ENCODE measurements at regions of chr5 and their contacts with region 1.

Region 1: DNA sequence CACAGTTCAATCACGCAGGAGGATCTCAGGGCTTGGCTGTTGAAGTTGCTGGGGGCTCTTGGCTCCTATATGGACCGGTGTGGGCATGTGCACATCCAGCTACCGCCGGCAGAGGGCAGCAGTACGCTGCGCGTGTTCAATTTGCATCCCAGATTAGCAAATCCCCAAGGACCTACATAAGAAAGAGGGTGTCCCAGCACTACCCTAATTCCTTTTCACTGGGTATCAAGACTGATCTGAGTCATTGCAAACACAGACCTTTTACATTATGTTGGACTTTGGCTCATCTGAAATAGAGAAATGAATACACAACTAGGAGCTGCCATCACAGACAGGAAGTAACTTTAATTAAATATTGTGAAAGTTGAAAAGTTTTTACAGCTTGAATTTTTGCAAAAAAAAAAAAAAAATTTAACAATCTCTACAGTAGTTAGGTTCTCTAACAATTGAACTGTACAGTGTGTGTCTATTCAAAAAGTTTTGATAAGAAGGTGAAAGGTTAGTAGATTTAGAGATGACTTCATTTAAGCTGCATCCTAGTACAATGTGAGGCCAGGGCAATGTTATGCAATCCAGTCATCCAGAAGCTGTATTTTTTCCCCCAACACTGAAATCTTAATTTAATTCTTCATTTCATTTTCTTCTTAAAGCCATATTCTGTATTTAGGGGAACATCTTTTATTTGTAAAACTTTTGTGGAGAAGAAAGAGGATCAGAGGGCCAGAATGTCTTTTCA is 404.0 kb downstream of the EBF1 start:
- DNase-seq: peak; percentile 16
- H3K4me3 ChIP-seq: no peak overlapping the region
- H3K27ac ChIP-seq: no peak overlapping the region
- H3K27me3 ChIP-seq: no peaks in the 10 kb centered on the region
- CTCF ChIP-seq: peak; percentile 97

Region 2: GRCh38 chr5:158174918-158175851 is 520.6 kb before region 1 on chr5:
- CTCF ChIA-PET with region 1: interaction called, 55 read pairs
- POLR2A ChIA-PET with region 1: no interaction called
- DNase-seq: peak; percentile 11
- H3K4me3 ChIP-seq: no peak overlapping the region
- H3K27ac ChIP-seq: no peak overlapping the region
- H3K27me3 ChIP-seq: peaks cover 2% of the 10 kb centered on the region
- CTCF ChIP-seq: peak; percentile 90

Region 3: DNA sequence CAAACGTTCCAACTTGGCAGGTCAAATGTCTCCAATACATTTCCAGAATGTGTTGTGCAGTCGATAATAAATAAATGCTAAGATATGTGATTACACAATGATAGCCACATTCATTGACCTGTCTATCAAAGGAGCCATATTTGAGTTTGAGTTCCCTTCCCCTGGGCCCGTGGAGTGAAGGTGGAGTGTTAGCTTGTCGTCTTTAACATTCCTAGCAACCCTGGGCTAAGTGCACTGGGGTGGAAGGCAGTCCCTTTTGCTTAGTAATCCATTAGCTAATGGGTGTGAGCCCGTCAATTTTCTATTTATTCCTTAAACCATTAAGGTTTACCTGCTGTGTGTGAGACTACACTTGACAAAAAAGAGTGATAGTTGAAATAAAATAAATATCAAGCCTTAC is 11.3 kb before region 1 on chr5:
- CTCF ChIA-PET with region 1: interaction called, 10 read pairs
- POLR2A ChIA-PET with region 1: no interaction called
- DNase-seq: no peak
- H3K4me3 ChIP-seq: no peak overlapping the region
- H3K27ac ChIP-seq: no peak overlapping the region
- H3K27me3 ChIP-seq: no peaks in the 10 kb centered on the region
- CTCF ChIP-seq: no peak

Region 4: GRCh38 chr5:159048298-159048697 is 352.5 kb after region 1 on chr5:
- CTCF ChIA-PET with region 1: no interaction called
- POLR2A ChIA-PET with region 1: no interaction called
- DNase-seq: no peak
- H3K4me3 ChIP-seq: no peak overlapping the region
- H3K27ac ChIP-seq: no peak overlapping the region
- H3K27me3 ChIP-seq: peaks cover 3% of the 10 kb centered on the region
- CTCF ChIP-seq: no peak

Region 5: GRCh38 chr5:159094745-159095144 is 399.0 kb after region 1 on chr5:
- CTCF ChIA-PET with region 1: interaction called, 44 read pairs
- POLR2A ChIA-PET with region 1: no interaction called
- DNase-seq: no peak
- H3K4me3 ChIP-seq: no peak overlapping the region
- H3K27ac ChIP-seq: no peak overlapping the region
- H3K27me3 ChIP-seq: peaks cover 29% of the 10 kb centered on the region
- CTCF ChIP-seq: no peak

Region 6: DNA sequence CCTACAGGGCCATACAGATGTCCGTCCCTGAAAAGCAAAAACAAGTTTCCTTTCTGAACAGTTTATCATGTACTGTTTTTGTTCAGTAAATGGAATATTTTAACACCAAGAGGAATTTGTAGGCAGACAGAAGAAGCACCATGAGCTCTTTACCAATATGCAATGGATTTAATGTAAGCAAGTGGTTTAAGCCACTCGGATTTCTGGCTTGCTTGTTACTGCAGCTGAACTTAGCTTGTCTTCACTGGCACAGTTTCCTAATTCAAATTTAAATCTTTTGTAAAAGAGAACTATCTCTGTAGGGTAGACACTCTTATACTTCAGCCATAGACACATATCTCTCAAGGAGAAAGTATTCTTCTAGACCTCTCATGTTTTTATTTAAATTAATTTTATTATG is 416.7 kb after region 1 on chr5:
- CTCF ChIA-PET with region 1: interaction called, 370 read pairs
- POLR2A ChIA-PET with region 1: interaction called, 5 read pairs
- DNase-seq: no peak
- H3K4me3 ChIP-seq: no peak overlapping the region
- H3K27ac ChIP-seq: no peak overlapping the region
- H3K27me3 ChIP-seq: peaks cover 13% of the 10 kb centered on the region
- CTCF ChIP-seq: no peak

Region 7: GRCh38 chr5:159133041-159133741 is 437.4 kb after region 1 on chr5:
- CTCF ChIA-PET with region 1: interaction called, 104 read pairs
- POLR2A ChIA-PET with region 1: no interaction called
- DNase-seq: peak; percentile 15
- H3K4me3 ChIP-seq: no peak overlapping the region
- H3K27ac ChIP-seq: no peak overlapping the region
- H3K27me3 ChIP-seq: peaks cover 11% of the 10 kb centered on the region
- CTCF ChIP-seq: peak; percentile 80

Measured in AG04450 (cell line).